Activated naive CD4-positive, alpha-beta T cell treated with anti-CD3 and anti-CD28 coated beads, Interleukin-2, amount 10 ng/mL, durations not matched to agents 7 days and 5 days (primary cell): ENCODE measurements at regions of chr10 and their contacts with region 1.

Region 1: DNA sequence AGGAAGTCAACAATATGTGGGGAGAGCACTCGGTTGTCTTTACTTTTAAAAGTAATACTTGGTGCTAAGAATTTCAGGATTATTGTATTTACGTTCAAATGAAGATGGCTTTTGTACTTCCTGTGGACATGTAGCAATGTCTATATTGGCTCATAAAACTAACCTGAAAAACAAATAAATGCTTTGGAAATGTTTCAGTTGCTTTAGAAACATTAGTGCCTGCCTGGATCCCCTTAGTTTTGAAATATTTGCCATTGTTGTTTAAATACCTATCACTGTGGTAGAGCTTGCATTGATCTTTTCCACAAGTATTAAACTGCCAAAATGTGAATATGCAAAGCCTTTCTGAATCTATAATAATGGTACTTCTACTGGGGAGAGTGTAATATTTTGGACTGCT is 32.7 kb downstream of the SIRT1 start:
- DNase-seq: no peak
- H3K4me3 Mint-ChIP-seq: no peak overlapping the region
- H3K27ac Mint-ChIP-seq: no peak overlapping the region
- H3K4me1 Mint-ChIP-seq: no peaks in the 10 kb centered on the region
- H3K27me3 Mint-ChIP-seq: no peaks in the 10 kb centered on the region

Region 2: DNA sequence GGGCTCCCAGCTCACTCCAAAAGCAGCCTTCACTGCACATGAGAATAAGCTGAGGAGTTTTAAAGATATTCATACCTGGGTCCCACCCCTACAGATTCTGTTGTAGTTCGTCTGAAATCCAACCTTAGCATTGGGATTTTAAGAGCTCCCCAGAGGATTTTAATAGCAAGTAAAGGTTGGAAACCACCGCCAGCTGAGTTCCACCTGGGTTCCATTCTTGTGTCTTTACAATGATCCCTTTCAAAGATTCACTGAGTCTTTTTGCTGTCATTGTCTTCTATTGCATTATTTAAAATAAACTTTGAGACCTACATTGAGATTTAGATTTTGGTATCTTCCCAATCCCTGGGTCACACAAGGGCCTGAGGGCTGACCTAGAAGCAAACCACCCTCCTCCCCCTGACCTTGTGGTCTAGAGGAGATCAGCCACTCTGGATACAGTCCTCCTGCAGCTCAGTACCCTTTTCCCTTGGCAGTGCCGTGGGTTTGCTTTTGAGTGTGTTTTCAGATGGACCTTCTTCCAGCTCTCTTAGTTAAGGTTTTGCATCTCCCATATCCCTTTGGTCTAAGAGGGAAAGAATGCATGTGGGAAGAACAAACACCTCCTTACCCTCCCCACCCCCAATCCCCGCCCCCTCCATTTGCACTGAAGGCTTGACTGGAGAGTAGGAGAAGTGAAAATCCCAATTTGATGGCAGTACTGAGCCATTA is 55.3 kb before region 1 on chr10:
- CTCF ChIA-PET with region 1: interaction called, 10 read pairs
- DNase-seq: no peak
- H3K4me3 Mint-ChIP-seq: no peak overlapping the region
- H3K27ac Mint-ChIP-seq: no peak overlapping the region
- H3K4me1 Mint-ChIP-seq: no peaks in the 10 kb centered on the region
- H3K27me3 Mint-ChIP-seq: no peaks in the 10 kb centered on the region

Region 3: DNA sequence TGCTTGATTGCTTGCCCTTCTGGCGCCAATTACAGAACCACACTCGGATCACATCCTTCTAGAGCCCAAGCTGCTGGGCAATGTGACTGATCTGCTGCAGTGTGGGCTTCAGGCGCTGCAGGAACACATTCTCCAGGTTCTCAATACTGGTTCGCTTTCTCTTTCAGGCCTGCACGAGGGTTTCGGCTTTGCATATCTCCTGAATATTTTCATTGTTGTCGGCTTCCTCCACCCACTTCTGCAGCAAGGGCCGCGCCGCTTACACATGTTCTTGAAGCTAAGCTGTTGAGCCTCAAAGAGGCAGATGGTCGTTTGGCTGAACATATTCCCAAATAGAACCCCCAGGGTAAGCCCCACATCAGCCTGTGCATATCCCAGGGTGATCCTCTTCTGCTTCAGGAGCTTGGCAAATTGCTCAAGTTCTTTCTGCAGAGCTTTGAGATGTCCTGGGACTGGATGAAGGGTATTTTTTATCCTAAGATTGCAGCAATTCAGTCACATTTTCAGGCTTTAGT is 93.3 kb after region 1 on chr10:
- CTCF ChIA-PET with region 1: no interaction called
- DNase-seq: no peak
- H3K4me3 Mint-ChIP-seq: no peak overlapping the region
- H3K27ac Mint-ChIP-seq: no peak overlapping the region
- H3K4me1 Mint-ChIP-seq: no peaks in the 10 kb centered on the region
- H3K27me3 Mint-ChIP-seq: no peaks in the 10 kb centered on the region